Right ventricle myocardium superior (tissue), 1 donor: ENCODE measurements at regions of chr2 and their contacts with region 1.

Region 1: DNA sequence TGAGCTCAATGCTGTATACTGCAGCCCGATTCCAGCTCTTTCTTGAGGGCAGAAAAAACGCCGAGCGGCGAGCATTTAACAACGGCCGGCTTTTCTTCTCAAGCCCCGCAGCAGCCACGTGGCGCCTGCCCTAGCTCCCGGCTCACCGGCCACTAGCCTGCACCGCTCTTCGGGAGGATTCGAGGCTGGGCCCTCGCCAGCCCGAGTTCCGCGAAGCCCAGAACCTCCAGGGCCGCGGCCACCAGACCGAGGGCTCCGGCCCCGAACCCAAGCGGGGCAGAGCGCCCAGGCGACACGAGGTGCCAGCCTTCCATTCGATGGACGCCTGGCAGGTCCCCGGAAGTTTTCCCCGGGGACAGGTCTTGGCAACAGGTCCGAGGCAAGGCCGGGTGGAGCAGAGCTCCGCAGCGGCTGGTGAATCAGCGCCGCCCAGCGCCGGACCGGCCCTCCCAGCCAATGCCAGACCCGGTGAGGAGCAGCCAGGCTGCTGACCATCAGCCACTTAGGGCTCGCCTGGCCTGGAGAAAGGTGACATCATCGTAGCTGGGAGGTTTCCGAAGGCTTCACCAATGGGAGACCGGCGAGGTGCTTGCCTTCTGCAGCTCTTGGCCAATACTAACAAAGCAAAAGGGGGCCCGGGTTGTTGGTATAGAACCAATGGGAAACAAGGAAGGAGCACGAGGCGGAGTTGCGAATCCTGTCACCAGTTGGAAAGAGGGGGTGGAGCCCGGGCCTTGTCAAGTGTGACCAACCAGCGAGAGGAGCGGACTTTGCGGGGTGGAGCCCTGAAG is 544 bp upstream of the MXD1 start:
- DNase-seq: peak; percentile 100
- ATAC-seq: peak; percentile 94

Region 2: GRCh38 chr2:70070541-70071268 is 156.3 kb after region 1 on chr2:
- intact Hi-C with region 1: loop called (anchors 5 kb)
- DNase-seq: peak; percentile 55
- ATAC-seq: peak; percentile 96

Region 3: GRCh38 chr2:70086838-70087701 is 172.7 kb after region 1 on chr2 and contains the start of gene PCBP1:
- intact Hi-C with region 1: loop called (anchors 5 kb)
- DNase-seq: peak; percentile 97
- ATAC-seq: peak; percentile 93
- total RNA-seq, gene PCBP1: 201 TPM

Region 4: DNA sequence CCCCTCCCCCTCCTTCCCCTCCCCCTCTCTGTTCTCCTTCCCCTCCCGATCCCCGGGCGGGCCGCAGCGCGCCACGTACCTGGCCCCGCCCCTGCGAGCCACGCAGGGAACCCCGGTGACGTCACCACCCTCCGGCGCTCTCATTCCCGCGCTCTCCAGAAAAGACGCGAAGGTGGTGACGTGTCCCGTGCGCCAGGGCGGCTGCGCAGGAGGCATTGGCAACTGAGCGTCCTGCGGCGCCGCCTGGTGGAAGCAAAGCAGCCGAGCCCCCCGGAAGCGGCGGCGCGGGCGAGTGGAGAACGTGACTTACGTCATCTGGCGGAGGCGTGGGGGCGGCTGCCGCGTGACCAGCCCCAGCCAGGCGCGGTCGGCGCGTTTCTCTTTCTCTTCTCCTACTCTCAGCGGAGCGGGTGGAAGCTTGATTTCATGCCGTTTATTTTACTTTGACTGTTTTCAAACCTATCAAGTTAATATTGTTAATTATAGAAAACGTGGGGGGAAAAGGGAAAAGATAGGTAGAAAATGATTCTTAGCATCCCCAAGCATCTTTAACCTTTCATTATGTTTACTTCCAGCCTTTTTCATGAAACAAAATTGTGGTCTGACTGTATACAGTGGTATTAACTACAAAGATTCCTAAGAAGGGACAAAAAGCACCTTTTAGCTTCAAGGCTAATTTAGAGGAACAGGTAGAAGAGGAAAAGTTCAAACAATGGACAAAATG is 228.4 kb after region 1 on chr2:
- intact Hi-C with region 1: loop called (anchors 2 kb)
- DNase-seq: peak; percentile 100
- ATAC-seq: peak; percentile 90

Region 5: DNA sequence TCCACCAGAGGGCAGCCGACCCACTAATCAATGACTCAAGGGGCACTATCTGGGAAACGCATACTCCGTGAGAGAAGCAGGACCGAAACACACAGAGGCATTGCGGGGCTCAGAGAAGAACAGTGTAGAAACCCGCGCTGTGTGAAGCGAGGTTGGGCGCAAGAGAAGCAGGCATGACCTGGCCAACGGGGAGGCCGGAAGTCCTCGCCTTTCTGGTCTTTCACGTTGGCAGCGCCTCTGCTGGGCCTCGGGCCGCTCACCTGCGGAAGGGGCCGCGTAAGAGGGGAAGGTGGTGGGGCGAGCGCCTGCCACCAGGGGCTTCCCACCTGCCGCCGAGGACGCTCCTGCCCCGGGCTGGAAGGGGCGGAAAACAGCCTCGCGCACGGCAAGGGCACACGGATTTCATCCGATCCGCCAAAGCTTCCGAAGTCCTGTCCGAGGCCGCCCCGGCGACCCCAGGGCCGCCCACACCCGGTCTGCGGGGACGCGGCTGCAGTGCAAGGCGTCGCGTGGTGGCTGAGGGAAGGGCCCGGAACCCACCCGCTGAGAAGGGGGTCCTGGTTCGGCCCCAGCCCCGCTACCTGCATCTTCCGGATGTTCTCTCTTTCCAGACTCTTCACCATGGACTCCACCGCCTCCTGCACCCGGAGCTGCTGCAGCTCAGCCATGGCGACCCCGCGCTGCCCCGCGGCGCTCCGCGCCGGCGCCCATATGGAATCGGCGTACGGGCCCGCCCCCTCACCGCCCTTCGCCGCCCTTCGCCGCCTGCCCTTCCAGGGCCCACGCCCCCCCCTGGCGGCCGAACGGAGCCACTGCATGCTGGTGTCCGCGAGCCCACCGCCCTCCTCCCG is 387.2 kb after region 1 on chr2 and contains the start of gene FAM136A:
- intact Hi-C with region 1: loop called (anchors 10 kb)
- DNase-seq: peak; percentile 93
- ATAC-seq: peak; percentile 98
- total RNA-seq, gene FAM136A: 23.3 TPM